Ascending aorta (tissue), 2 donors: ENCODE measurements at regions of chr15 and their contacts with region 1.

Region 1: DNA sequence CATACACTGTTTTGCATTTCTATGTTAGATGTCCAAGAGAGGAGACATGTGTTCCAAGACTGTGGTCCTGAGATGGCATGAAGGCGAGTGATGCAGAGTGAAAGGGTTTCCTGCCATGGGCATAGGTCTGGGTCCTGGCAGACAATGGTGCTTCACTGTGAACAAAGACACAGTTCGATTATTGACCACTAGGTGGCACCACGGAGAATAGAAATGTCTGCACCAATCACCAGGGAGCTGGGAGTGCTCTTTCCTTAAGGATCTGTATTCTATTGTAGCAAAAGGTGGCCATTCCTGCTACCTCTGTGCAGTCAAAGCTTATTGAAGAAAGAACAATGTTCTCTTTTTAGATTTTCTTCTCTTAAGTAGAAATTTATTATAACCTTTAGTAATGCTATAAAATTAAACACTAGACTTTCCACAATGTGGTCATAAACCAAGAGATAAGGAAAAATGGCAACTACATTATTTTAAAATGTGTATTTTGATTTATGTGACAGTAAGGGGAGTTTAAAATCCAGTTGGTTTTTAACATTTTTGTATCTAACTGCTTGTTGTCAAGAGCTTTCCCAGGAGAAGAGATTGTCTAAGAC is 88.7 kb downstream of the GABRG3 start:
- DNase-seq: no peak
- H3K4me3 ChIP-seq: no peak overlapping the region
- H3K27ac ChIP-seq: no peak overlapping the region
- H3K4me1 ChIP-seq: no peaks in the 10 kb centered on the region
- H3K27me3 ChIP-seq: no peaks in the 10 kb centered on the region
- CTCF ChIP-seq: peak in 1 of 3 experiments; percentile 15

Region 2: GRCh38 chr15:26807517-26808427 is 251.9 kb before region 1 on chr15:
- intact Hi-C with region 1: no loop called
- DNase-seq: no peak
- H3K4me3 ChIP-seq: no peak overlapping the region
- H3K27ac ChIP-seq: no peak overlapping the region
- H3K4me1 ChIP-seq: no peaks in the 10 kb centered on the region
- H3K27me3 ChIP-seq: no peaks in the 10 kb centered on the region
- CTCF ChIP-seq: no peak

Region 3: GRCh38 chr15:26967719-26968269 is 91.9 kb before region 1 on chr15:
- intact Hi-C with region 1: no loop called
- DNase-seq: no peak
- H3K4me3 ChIP-seq: no peak overlapping the region
- H3K27ac ChIP-seq: no peak overlapping the region
- H3K4me1 ChIP-seq: no peaks in the 10 kb centered on the region
- H3K27me3 ChIP-seq: no peaks in the 10 kb centered on the region
- CTCF ChIP-seq: no peak

Region 4: GRCh38 chr15:26996250-26996649 is 63.5 kb before region 1 on chr15:
- intact Hi-C with region 1: loop called (anchors 10 kb)
- DNase-seq: no peak
- H3K4me3 ChIP-seq: no peak overlapping the region
- H3K27ac ChIP-seq: no peak overlapping the region
- H3K4me1 ChIP-seq: no peaks in the 10 kb centered on the region
- H3K27me3 ChIP-seq: no peaks in the 10 kb centered on the region
- CTCF ChIP-seq: no peak

Region 5: DNA sequence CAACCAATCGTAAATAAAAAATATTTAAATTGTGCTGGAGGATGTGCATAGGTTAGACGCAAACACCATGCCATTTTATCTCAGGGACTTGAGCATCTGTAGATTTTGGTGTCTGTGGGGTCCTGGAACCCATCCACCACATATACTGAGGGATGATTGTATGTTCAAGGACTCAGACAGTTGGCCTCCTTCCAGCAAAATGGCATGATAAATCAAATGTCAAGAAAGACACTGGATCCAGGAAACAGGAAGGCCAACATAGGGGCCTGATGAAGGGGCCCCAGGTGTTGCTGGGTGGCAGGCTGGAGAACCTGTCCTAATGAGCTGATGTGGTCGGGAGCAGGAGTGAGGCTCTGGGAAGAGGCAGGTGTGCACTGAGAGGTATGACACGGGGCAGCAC is 200.8 kb after region 1 on chr15:
- intact Hi-C with region 1: no loop called
- DNase-seq: no peak
- H3K4me3 ChIP-seq: no peak overlapping the region
- H3K27ac ChIP-seq: no peak overlapping the region
- H3K4me1 ChIP-seq: no peaks in the 10 kb centered on the region
- H3K27me3 ChIP-seq: no peaks in the 10 kb centered on the region
- CTCF ChIP-seq: no peak